Esophagus squamous epithelium (tissue), 5 donors: ENCODE measurements at regions of chr2 and their contacts with region 1.

Region 1: DNA sequence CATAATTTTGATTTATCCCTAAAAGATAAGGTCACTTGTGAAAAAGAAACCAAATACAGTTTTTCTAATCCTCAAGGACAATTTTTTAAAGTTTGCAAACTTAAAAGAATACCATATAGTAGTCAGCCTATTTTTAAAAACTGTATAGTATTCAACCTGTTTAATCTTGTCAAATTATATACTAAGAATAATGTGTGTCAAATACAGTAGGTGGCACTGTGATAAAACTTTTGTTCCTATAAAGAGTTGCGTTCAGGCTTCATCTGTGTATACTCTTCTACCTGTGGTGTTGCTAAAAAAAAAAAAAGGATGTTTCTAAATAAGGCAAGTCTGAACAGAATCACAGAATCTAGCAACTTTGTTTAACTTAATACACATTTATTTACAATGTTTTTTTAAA is 68.6 kb downstream of the CCDC138 start:
- DNase-seq: no peak
- H3K4me3 ChIP-seq: no peak overlapping the region
- H3K27ac ChIP-seq: no peak overlapping the region
- H3K4me1 ChIP-seq: no peaks in the 10 kb centered on the region
- H3K27me3 ChIP-seq: no peaks in the 10 kb centered on the region
- CTCF ChIP-seq: peak in 5 of 6 experiments; percentile 19 to 63 (median 35)
- POLR2A ChIP-seq: no peak

Region 2: GRCh38 chr2:108988796-108989713 is 133.9 kb after region 1 on chr2 and contains the start of gene EDAR:
- intact Hi-C with region 1: loop called (anchors 10 kb)
- DNase-seq: no peak
- H3K4me3 ChIP-seq: peak within 1 kb of the TSS; percentile 40 to 60 (median 50)
- H3K27ac ChIP-seq: peak within 1 kb of the TSS; percentile 41 to 84 (median 79)
- H3K4me1 ChIP-seq: peaks cover 0 to 49% (median 4%) of the 10 kb centered on the region in 3 donors
- H3K27me3 ChIP-seq: peaks cover 0 to 31% (median 0%) of the 10 kb centered on the region in 4 donors
- CTCF ChIP-seq: peak in 5 of 6 experiments; percentile 48 to 84 (median 68)
- POLR2A ChIP-seq: peak in 1 of 4 donors; percentile 9
- total RNA-seq, gene EDAR: 3.9 to 5.3 (median 4.4) TPM